ENCODE measurements at regions of chr3 and their contacts with region 1.

Region 1: GRCh38 chr3:188712248-188712924 is 459.4 kb upstream of the TPRG1 start:
- DNase-seq: peak; percentile 55
- H3K4me3 ChIP-seq: no peak overlapping the region; the same call in 1 of the 2 replicates
- H3K27ac ChIP-seq: peak overlapping the region; percentile 82
- H3K27me3 ChIP-seq: no peaks in the 10 kb centered on the region
- CTCF ChIP-seq: no peak

Region 2: GRCh38 chr3:188568736-188569135 is 143.7 kb before region 1 on chr3:
- CTCF ChIA-PET with region 1: interaction called, 10 read pairs
- POLR2A ChIA-PET with region 1: no interaction called
- DNase-seq: no peak
- H3K4me3 ChIP-seq: no peak overlapping the region
- H3K27ac ChIP-seq: no peak overlapping the region
- H3K27me3 ChIP-seq: no peaks in the 10 kb centered on the region
- CTCF ChIP-seq: no peak